ENCODE measurements at regions of chr6 and their contacts with region 1.

Region 1: DNA sequence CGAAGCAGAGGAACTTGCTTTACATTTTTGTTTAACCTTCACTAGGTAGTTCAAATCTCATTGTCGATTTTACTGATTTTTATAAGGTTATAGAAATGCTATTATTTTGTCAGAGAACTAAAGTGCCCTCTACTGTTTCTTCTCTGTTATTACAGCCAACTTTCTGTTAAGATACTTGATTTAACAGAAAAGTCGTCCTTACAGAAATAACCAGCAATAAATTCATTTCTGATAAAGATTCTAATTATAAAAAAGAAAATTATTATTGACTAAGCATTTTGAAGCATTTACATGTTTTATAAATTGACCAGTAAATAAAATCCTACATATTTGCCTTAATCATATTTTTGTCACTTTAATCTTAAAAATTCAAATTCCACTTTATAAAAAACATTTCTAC is 60.8 kb downstream of the OGFRL1 start:
- DNase-seq: no peak
- ATAC-seq: no peak
- H3K4me3 Mint-ChIP-seq: no peak overlapping the region
- H3K27ac Mint-ChIP-seq: no peak overlapping the region
- H3K4me1 Mint-ChIP-seq: peaks cover 6% of the 10 kb centered on the region
- H3K27me3 Mint-ChIP-seq: no peaks in the 10 kb centered on the region

Region 2: DNA sequence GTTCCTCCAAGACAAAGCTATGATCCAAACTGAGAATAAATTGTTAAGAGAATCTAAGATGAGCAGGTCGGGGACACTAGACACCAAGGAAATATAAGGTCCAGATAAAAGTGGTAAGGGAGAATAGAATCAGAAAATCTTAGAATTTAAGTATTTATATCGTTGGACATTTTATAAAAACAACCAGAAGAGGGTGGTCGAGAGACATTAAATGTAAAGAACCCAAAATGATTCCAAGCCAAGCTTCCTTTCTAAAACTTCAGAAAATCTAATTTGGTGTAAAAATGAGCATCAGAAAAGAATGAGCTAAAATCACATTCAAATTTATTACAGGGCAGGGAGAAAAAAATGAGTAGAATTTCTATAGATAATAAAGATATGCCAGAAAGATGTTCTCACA is 158.6 kb before region 1 on chr6:
- CTCF ChIA-PET with region 1: interaction called, 8 read pairs
- POLR2A ChIA-PET with region 1: no interaction called
- intact Hi-C with region 1: loop called (anchors 1 kb)
- DNase-seq: no peak
- ATAC-seq: no peak
- H3K4me3 Mint-ChIP-seq: no peak overlapping the region
- H3K27ac Mint-ChIP-seq: no peak overlapping the region
- H3K4me1 Mint-ChIP-seq: no peaks in the 10 kb centered on the region
- H3K27me3 Mint-ChIP-seq: peaks cover 6% of the 10 kb centered on the region

Region 3: GRCh38 chr6:71288228-71289001 is 61.0 kb before region 1 on chr6 and contains the start of gene OGFRL1:
- CTCF ChIA-PET with region 1: no interaction called
- POLR2A ChIA-PET with region 1: no interaction called
- intact Hi-C with region 1: loop called in 1 of 2 experiments (anchors 2 kb)
- DNase-seq: peak; percentile 82
- ATAC-seq: peak; percentile 91
- H3K4me3 Mint-ChIP-seq: peak within 1 kb of the TSS; percentile 73
- H3K27ac Mint-ChIP-seq: peak within 1 kb of the TSS; percentile 52
- H3K4me1 Mint-ChIP-seq: peaks cover 28% of the 10 kb centered on the region
- H3K27me3 Mint-ChIP-seq: no peaks in the 10 kb centered on the region
- total RNA-seq, gene OGFRL1: 4.0 to 4.3 TPM